AG04449 (cell line): ENCODE measurements at regions of chr5 and their contacts with region 1.

Region 1: GRCh38 chr5:119411935-119412602 is 40.2 kb upstream of the HSD17B4 start:
- DNase-seq: no peak
- H3K4me3 ChIP-seq: peak overlapping the region; percentile 62
- CTCF ChIP-seq: peak; percentile 74

Region 2: DNA sequence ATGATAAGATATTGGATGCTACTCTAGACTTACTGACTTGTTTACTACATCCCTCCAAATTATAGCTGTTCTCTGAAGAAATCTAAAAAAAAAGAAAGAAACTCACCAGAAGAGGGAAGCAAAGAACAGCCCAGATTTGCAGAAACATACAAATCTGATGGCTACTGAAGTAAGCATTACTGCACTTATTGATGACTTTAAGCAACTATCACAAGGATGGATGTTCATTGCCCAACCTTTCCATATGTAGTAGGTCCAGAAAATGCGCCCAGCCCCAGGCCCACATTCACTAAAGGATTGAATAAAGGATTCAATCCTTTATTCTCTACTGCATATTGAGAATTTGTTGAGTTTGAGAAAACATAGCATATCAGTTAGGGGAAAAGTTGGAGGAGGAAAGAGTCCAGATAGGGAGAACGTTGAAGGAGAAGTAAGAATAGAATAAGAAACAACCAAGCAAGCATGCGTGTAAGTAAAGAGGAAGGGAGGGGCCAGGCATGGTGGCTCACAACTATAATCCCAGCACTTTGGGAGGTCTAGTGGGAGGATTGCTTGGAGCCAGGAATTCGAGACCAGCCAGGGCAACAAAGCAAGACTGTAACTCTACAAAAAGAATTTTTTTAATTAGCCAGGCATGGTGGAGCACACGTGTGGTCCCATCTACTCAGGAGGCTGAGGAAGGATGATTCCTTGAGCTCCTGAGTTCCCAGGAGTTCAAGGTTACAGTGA is 389.9 kb before region 1 on chr5:
- CTCF ChIA-PET with region 1: interaction called, 139 read pairs
- POLR2A ChIA-PET with region 1: no interaction called
- DNase-seq: peak; percentile 3
- H3K4me3 ChIP-seq: no peak overlapping the region
- CTCF ChIP-seq: peak; percentile 37

Region 3: DNA sequence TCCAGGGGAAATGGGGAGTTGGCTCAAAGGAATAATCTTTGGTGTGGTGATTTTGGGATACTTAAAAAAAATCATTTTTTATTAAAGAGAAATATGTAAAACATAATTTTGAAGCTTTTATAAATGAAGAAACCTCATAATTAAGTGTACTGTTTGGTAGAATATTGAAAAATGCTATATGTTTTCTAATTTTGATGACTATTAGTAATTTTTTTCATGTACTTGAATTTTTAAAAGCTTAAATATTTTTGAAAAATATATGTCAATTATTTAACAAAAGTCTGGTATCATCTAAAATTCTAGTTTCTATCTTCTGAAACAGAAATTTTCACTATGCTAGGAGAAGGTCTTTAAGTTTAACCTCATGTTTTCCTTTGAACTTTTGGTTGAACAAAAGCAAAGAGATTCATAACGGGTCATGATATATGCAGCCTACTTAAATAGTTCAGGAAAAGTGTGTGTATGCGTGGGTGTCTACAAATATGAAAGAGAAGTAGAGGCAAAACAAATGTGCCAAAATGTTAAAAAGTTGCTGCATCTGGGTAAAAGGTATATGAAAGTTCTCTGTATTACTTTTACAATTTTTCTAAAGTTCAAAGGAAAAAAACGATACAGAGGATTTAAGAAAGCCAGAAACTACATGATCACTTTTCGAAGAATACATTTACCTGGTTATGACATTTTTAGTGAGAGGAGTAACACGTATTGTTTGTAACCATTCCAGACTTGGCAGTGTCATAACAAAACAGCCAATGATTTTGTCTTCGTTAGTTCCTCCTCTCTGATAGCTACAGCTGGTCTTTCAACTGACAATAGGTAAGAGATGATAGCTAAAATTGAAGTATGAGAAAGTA is 173.6 kb before region 1 on chr5:
- CTCF ChIA-PET with region 1: interaction called, 14 read pairs
- POLR2A ChIA-PET with region 1: no interaction called
- DNase-seq: no peak
- H3K4me3 ChIP-seq: no peak overlapping the region
- CTCF ChIP-seq: no peak

Region 4: DNA sequence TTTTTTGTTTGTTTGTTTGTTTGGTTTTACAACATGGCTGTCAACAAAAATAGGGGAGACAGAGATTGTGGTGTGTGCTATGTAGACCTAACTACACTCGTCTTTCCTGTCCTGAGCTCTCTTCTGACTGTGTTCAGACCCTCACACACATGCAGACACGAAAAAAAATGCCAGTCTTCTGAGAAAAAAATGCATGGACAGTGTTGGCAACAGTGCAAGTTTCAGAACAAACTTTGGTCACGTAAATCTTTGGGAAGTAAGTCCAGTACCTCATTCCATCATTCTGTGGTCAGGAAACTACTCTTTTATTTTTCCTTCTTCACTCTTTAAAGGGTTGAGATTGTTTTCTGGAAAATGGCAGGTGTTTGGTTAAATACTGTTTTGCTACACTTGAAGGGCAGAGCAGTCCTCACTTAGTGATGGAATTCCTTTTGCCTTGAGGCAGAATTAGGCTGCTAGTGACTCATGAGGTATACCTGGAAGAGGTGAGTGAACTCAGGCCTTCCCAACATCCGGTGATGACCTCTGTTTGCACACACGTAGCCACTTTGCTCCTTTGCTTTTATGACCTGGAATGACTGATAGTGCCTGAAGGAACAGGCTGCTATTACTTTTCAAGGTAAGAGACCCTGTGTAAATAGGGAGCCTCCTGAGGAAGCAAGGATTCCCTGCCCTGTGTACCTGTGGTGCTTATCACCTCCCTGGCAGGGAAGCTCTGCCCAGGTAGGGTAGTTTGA is 137.9 kb before region 1 on chr5:
- CTCF ChIA-PET with region 1: interaction called, 16 read pairs
- POLR2A ChIA-PET with region 1: no interaction called
- DNase-seq: no peak
- H3K4me3 ChIP-seq: no peak overlapping the region; the same call in 1 of the 2 replicates
- CTCF ChIP-seq: no peak

Region 5: DNA sequence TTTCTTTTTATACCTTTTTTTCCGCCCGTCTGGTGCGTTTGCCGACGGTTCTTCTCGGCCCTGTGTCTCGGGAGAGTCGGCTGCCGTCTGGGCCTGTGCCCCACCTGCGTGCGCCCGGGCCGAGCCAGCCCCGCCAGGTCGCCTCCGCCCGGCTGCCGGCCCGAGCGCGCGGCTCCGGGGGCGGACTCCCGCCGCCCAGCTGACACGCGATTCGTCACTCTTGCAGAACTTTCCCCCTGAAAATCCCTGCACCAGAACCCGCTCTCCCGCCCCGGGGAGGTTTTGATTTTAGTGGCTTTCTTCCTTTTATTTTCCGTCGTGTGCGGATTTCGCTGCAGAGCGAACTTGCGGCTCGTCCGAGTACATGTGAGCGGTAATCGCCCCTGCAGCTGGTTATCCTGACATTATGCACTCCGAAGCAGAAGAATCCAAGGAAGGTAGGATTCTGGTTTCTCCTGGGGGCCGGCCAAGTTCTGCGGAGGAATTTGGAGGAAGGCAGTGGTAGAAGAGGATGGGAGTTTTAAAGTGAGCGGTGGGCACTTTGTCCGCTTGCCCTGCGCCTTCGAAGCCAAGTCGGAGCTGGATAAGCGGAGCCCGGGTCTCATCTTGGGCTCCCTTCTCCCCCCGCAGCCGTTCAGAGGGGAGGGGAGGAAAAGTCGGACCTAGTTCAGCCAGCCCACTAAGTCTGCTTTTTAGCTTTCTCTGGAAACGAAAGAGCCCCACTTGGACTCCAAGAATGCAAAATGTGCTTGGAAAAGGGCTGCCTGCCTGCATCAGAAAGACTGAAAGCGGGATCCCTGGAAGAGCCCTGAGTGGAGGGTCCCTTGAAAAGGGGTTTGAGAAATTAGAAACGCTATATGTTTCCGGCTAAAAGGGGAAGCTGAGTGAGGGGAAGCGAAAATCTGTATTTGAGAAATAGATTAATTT is 56.1 kb before region 1 on chr5 and contains the start of gene TNFAIP8:
- CTCF ChIA-PET with region 1: interaction called, 29 read pairs
- POLR2A ChIA-PET with region 1: no interaction called
- DNase-seq: no peak
- H3K4me3 ChIP-seq: peak within 1 kb of the TSS; percentile 69
- CTCF ChIP-seq: no peak

Region 6: GRCh38 chr5:119397518-119398380 is 14.3 kb before region 1 on chr5:
- CTCF ChIA-PET with region 1: interaction called, 69 read pairs
- POLR2A ChIA-PET with region 1: no interaction called
- DNase-seq: no peak
- H3K4me3 ChIP-seq: no peak overlapping the region
- CTCF ChIP-seq: no peak

Region 7: GRCh38 chr5:119801570-119801969 is 389.5 kb after region 1 on chr5:
- CTCF ChIA-PET with region 1: no interaction called
- POLR2A ChIA-PET with region 1: no interaction called
- DNase-seq: no peak
- H3K4me3 ChIP-seq: no peak overlapping the region
- CTCF ChIP-seq: no peak